Aorta (tissue), 5 donors: ENCODE measurements at regions of chr10 and their contacts with region 1.

Region 1: GRCh38 chr10:3623746-3624145 is 161.3 kb downstream of the KLF6 start:
- DNase-seq: no peak
- ATAC-seq: no peak
- H3K4me3 ChIP-seq: peak overlapping the region in 1 of 2 donors; percentile 41
- H3K27ac ChIP-seq: peak overlapping the region in 1 of 2 donors; percentile 38
- H3K4me1 ChIP-seq: peaks cover 1 to 4% of the 10 kb centered on the region in 2 donors
- H3K27me3 ChIP-seq: no peaks in the 10 kb centered on the region

Region 2: DNA sequence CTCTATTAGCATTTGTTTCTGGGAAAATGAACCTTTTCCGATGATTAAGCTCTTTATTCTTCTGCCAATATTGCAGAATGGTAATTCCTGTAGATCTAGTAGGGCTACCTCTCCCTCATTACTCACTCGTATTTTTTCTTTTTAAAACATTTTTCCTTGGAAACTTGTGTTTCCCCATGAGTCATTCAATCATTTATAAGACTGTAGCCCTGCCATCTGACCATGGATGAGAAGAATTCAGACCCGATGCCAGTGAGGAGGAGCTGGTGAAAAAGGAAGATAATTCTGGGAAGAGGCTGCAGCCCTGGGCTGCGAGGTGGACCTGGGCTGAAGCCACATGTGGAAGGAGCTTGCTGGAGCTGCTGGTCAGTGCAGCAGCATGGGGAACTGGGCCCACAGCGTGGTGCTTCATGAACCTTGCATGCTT is 81.5 kb before region 1 on chr10:
- intact Hi-C with region 1: loop called in 1 of 2 experiments (anchors 5 kb)
- DNase-seq: peak; percentile 76 to 83
- ATAC-seq: peak; percentile 59
- H3K4me3 ChIP-seq: no peak overlapping the region
- H3K27ac ChIP-seq: peak overlapping the region in 1 of 2 donors; percentile 3
- H3K4me1 ChIP-seq: no peaks in the 10 kb centered on the region
- H3K27me3 ChIP-seq: no peaks in the 10 kb centered on the region

Region 3: DNA sequence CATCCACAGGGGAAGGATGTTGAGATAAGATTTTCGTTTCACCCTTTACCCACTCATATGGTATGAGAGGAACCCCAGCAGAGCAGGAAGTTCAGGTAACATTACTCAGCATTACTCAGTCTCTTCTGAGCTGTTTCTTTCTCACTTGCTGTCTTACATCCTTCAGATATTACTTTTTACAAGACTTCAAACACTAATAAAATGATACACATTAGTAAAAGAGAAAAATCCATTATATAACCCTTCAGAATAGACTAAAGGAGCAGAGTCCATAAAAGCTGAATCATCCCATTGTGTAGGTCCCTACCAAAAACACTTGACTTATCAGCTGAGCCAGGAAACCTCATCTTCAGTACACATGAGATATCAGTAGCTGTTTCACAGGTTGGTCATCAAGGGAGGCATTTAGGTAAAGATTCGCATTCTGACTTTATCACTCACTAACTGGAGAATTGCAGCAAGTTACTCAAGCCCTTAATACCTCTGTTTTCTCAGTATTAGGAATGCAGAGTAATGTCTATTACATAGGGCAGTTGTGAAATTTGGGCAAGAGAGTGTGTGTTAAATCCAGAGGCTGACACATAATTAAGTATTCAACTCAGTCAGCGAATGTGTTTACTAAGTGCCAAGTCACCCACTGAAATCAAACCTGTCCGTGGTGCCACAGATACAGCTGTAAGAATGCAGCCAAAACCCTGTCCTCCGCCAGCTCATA is 116.6 kb after region 1 on chr10:
- intact Hi-C with region 1: loop called in 1 of 2 experiments (anchors 10 kb)
- DNase-seq: no peak
- ATAC-seq: no peak
- H3K4me3 ChIP-seq: no peak overlapping the region
- H3K27ac ChIP-seq: no peak overlapping the region
- H3K4me1 ChIP-seq: no peaks in the 10 kb centered on the region
- H3K27me3 ChIP-seq: no peaks in the 10 kb centered on the region

Region 4: GRCh38 chr10:4459531-4459930 is 835.8 kb after region 1 on chr10:
- intact Hi-C with region 1: no loop called
- DNase-seq: no peak
- ATAC-seq: no peak
- H3K4me3 ChIP-seq: no peak overlapping the region
- H3K27ac ChIP-seq: no peak overlapping the region
- H3K4me1 ChIP-seq: no peaks in the 10 kb centered on the region
- H3K27me3 ChIP-seq: no peaks in the 10 kb centered on the region